HepG2 (cell line): ENCODE measurements at regions of chr7 and their contacts with region 1.

Region 1: GRCh38 chr7:73865738-73866445 is 4.9 kb downstream of the TMEM270 start:
- DNase-seq: peak; percentile 34
- ATAC-seq: peak; percentile 16; the same call in 1 of the 3 replicates
- H3K4me3 ChIP-seq: no peak overlapping the region
- H3K27ac ChIP-seq: no peak overlapping the region
- H3K4me1 ChIP-seq: peaks cover 34% of the 10 kb centered on the region
- H3K27me3 ChIP-seq: peaks cover 3 to 5% of the 10 kb centered on the region in 2 experiments; a peak in 4 of 5 replicates
- CTCF ChIP-seq: peak; percentile 61
- EP300 ChIP-seq: no peak
- POLR2A ChIP-seq: no peak
- RAD21 ChIP-seq: peak; percentile 56

Region 2: GRCh38 chr7:73647725-73648592 is 217.9 kb before region 1 on chr7:
- CTCF ChIA-PET with region 1: no interaction called
- POLR2A ChIA-PET with region 1: no interaction called
- in situ Hi-C with region 1: no loop called
- intact Hi-C with region 1: no loop called
- DNase-seq: peak; percentile 41
- ATAC-seq: peak; percentile 80
- H3K4me3 ChIP-seq: peak overlapping the region; percentile 45 to 73 (median 60)
- H3K27ac ChIP-seq: peak overlapping the region; percentile 30
- H3K4me1 ChIP-seq: peaks cover 79% of the 10 kb centered on the region
- H3K27me3 ChIP-seq: peaks cover 3 to 12% of the 10 kb centered on the region in 2 experiments; a peak in 3 of 5 replicates
- CTCF ChIP-seq: peak; percentile 54
- EP300 ChIP-seq: peak in 1 of 2 experiments; percentile 62; a peak in 2 of 4 replicates
- POLR2A ChIP-seq: peak; percentile 52 to 55; a peak in 3 of 4 replicates
- RAD21 ChIP-seq: peak; percentile 87

Region 3: DNA sequence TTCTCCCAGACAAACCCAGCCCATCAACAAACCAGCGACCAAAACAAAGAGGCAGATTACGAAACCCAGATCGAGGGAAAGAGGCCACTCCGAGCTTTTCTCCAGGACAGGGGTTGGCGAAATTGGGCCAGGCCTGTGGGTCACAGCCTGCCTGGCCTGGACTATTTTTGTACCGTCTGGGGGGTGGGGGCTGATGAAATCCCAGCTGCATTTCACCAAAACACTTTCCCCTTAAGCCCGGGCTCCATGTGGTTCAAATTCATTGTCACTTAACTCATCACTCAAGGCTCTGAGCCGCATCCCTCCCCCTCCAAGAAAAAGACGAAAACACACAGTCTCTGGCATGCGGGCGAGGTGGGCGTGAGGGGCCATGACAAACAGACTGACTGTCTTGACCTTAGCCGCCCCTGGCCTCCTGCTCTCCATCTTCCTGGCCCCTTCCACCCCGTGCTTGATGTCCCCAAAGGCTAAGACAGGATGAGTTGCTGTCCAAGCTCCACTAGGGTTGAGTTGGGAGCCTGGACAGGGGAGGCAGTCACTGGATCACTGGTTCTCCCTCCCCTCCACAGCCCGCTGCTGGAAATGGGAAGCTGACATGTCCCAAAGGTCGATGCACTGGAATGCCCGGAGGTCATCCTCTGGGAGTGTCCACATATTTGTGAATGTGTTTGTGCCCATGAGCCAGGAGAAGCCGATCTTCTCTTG is 14.2 kb after region 1 on chr7:
- CTCF ChIA-PET with region 1: no interaction called
- POLR2A ChIA-PET with region 1: interaction called, 25 read pairs
- in situ Hi-C with region 1: no loop called
- intact Hi-C with region 1: no loop called
- DNase-seq: peak; percentile 74
- ATAC-seq: peak; percentile 95
- H3K4me3 ChIP-seq: peak overlapping the region in 1 of 3 experiments; percentile 34; a peak in 2 of 6 replicates
- H3K27ac ChIP-seq: no peak overlapping the region
- H3K4me1 ChIP-seq: peaks cover 29% of the 10 kb centered on the region
- H3K27me3 ChIP-seq: peaks cover 0 to 10% of the 10 kb centered on the region in 2 experiments; a peak in 2 of 5 replicates
- CTCF ChIP-seq: no peak
- EP300 ChIP-seq: no peak
- POLR2A ChIP-seq: no peak
- RAD21 ChIP-seq: no peak

Region 4: GRCh38 chr7:73978661-73979563 is 113.0 kb after region 1 on chr7:
- CTCF ChIA-PET with region 1: interaction called, 12 read pairs
- POLR2A ChIA-PET with region 1: interaction called, 11 read pairs
- in situ Hi-C with region 1: no loop called
- intact Hi-C with region 1: no loop called
- DNase-seq: peak; percentile 89
- ATAC-seq: peak; percentile 84
- H3K4me3 ChIP-seq: no peak overlapping the region
- H3K27ac ChIP-seq: no peak overlapping the region
- H3K4me1 ChIP-seq: peaks cover 39% of the 10 kb centered on the region
- H3K27me3 ChIP-seq: peaks cover 1 to 6% of the 10 kb centered on the region in 2 experiments; a peak in 2 of 5 replicates
- CTCF ChIP-seq: peak; percentile 91
- EP300 ChIP-seq: peak in 1 of 2 experiments; percentile 42; a peak in 2 of 4 replicates
- POLR2A ChIP-seq: no peak
- RAD21 ChIP-seq: peak; percentile 77

Region 5: GRCh38 chr7:74026903-74027551 is 161.1 kb after region 1 on chr7:
- CTCF ChIA-PET with region 1: interaction called, 12 read pairs
- POLR2A ChIA-PET with region 1: no interaction called
- in situ Hi-C with region 1: loop called (anchors 5 kb)
- intact Hi-C with region 1: loop called (anchors 1 kb)
- DNase-seq: peak; percentile 24
- ATAC-seq: peak; percentile 84
- H3K4me3 ChIP-seq: no peak overlapping the region
- H3K27ac ChIP-seq: no peak overlapping the region
- H3K4me1 ChIP-seq: peaks cover 17% of the 10 kb centered on the region
- H3K27me3 ChIP-seq: peaks cover 16 to 59% of the 10 kb centered on the region in 2 experiments
- CTCF ChIP-seq: peak; percentile 90
- EP300 ChIP-seq: no peak
- POLR2A ChIP-seq: no peak
- RAD21 ChIP-seq: peak; percentile 63; the same call in 1 of the 2 replicates

Region 6: DNA sequence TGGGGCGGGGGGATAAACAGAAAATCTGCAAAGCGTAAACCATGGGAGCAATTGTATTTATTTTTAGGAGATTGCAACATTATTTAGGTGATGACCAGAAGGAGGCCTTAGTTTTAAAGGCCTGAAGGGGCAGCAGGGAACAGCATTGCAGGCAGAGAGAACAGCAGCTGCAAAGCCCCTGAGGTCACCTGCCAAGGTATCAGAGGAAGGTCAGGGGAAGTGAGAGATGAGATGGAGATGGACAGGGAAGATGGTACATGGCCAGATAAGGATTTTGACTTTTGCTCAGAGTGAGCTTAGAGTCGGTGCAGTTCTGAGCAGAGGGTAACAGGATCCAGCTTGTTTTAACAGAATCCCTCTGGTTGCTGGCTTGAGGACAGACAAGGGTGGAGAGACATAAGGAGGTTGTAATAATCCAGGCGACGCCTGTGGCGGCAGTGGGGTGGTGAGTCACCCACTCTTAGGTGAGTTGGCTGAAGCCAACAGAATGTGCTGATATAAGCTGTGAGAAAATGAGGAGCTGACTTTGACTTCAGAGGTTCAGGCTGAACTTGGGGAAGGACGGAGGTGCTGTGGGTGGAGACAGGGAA is 709.3 kb after region 1 on chr7:
- CTCF ChIA-PET with region 1: no interaction called
- POLR2A ChIA-PET with region 1: no interaction called
- in situ Hi-C with region 1: no loop called
- intact Hi-C with region 1: no loop called
- DNase-seq: no peak
- ATAC-seq: no peak
- H3K4me3 ChIP-seq: no peak overlapping the region
- H3K27ac ChIP-seq: no peak overlapping the region
- H3K4me1 ChIP-seq: peaks cover 16% of the 10 kb centered on the region
- H3K27me3 ChIP-seq: no peaks in the 10 kb centered on the region
- CTCF ChIP-seq: no peak
- EP300 ChIP-seq: no peak
- POLR2A ChIP-seq: no peak
- RAD21 ChIP-seq: no peak